ENCODE measurements at regions of chr5 and their contacts with region 1.

Region 1: GRCh38 chr5:39217365-39218281 is 1.7 kb downstream of the FYB1 start:
- DNase-seq: peak; percentile 76 to 83
- ATAC-seq: peak; percentile 80 to 90
- H3K4me3 ChIP-seq: no peak overlapping the region
- H3K27ac ChIP-seq: peak overlapping the region in 1 of 2 experiments; percentile 34; a peak in 2 of 6 replicates
- H3K4me1 ChIP-seq: peaks cover 11% of the 10 kb centered on the region
- CTCF ChIP-seq: peak; percentile 89
- EP300 ChIP-seq: no peak
- POLR2A ChIP-seq: no peak
- RAD21 ChIP-seq: peak; percentile 91 to 93

Region 2: DNA sequence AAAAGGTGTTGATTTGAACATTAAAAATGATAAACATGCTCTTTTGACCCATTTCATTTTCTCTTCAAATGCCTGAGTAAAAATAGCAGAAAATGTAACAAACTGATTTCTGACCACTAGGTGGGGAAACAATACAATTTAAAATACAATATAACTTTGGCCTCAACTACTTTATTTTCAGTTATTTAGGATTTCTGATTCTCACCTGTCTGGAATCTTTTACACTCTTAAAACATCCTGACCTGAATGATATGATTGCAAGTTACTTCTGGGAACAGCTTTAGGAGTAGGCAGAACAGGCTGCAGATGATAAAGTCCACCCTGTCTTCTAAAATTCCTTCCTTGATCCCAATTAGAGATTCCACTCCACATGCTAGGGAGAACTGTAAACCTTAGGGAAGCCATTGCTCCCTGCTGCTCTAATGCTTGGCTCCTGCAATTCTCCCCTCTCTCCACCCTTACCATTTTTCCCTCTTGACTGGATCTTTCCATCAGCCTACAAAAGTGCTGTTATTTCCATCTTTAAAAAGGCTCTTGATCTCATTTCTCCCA is 68.6 kb before region 1 on chr5:
- CTCF ChIA-PET with region 1: interaction called, 27 read pairs
- POLR2A ChIA-PET with region 1: no interaction called
- DNase-seq: peak in 1 of 2 experiments; percentile 38
- ATAC-seq: peak in 1 of 2 experiments; percentile 67; a peak in 3 of 6 replicates
- H3K4me3 ChIP-seq: no peak overlapping the region
- H3K27ac ChIP-seq: peak overlapping the region; percentile 52 to 66; a peak in 5 of 6 replicates
- H3K4me1 ChIP-seq: peaks cover 9% of the 10 kb centered on the region
- CTCF ChIP-seq: peak; percentile 66
- EP300 ChIP-seq: no peak
- POLR2A ChIP-seq: no peak
- RAD21 ChIP-seq: peak; percentile 78 to 82

Region 3: DNA sequence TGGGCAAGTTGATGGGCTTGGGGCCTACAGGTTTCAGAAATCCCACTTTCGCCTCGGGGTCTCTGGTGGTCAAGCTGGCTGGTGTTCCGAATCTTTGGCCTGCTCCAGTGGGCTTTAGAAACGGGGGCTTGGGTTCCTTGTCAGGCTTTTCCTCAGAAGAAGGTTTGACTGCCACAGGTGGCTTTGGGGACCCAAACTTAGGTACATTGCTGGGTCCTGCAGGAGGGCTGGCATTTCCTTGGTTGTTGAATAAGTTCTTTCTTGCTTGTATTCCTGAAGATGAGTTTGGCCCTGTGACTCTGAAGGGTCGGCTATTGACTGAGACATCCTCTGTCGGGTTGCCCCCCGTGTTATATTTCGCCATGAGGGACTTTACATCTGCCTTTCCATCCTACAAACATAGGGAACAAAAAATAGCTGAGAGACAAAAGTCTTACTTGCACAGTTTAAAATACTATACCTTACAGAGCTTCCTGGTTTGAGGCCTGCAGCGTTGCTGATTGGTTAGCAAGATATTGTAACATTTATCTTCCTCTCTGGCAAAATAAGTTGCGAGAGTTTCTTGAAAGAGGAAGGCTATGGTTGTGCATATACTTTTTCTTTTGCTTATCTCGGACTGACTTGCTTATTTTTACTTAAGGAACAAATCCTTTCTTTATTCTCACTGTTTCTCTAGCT is 14.9 kb before region 1 on chr5:
- CTCF ChIA-PET with region 1: interaction called, 27 read pairs
- POLR2A ChIA-PET with region 1: no interaction called
- DNase-seq: no peak
- ATAC-seq: no peak
- H3K4me3 ChIP-seq: no peak overlapping the region
- H3K27ac ChIP-seq: peak overlapping the region in 1 of 2 experiments; percentile 33; a peak in 3 of 6 replicates
- H3K4me1 ChIP-seq: peaks cover 25% of the 10 kb centered on the region
- CTCF ChIP-seq: no peak
- EP300 ChIP-seq: no peak
- POLR2A ChIP-seq: no peak
- RAD21 ChIP-seq: no peak

Region 4: GRCh38 chr5:39274398-39275085 is 56.9 kb after region 1 on chr5:
- CTCF ChIA-PET with region 1: interaction called, 43 read pairs
- POLR2A ChIA-PET with region 1: no interaction called
- DNase-seq: no peak
- ATAC-seq: no peak
- H3K4me3 ChIP-seq: no peak overlapping the region
- H3K27ac ChIP-seq: no peak overlapping the region
- H3K4me1 ChIP-seq: no peaks in the 10 kb centered on the region
- CTCF ChIP-seq: no peak
- EP300 ChIP-seq: no peak
- POLR2A ChIP-seq: no peak
- RAD21 ChIP-seq: no peak

Region 5: GRCh38 chr5:39376293-39376714 is 158.7 kb after region 1 on chr5:
- CTCF ChIA-PET with region 1: interaction called, 25 read pairs
- POLR2A ChIA-PET with region 1: interaction called, 4 read pairs
- DNase-seq: peak; percentile 65 to 67
- ATAC-seq: peak; percentile 85 to 95; a peak in 5 of 6 replicates
- H3K4me3 ChIP-seq: no peak overlapping the region
- H3K27ac ChIP-seq: no peak overlapping the region; a peak in 1 of 6 replicates
- H3K4me1 ChIP-seq: no peaks in the 10 kb centered on the region
- CTCF ChIP-seq: peak; percentile 95
- EP300 ChIP-seq: no peak
- POLR2A ChIP-seq: no peak
- RAD21 ChIP-seq: peak; percentile 96 to 97